ENCODE measurements at regions of chr7 and their contacts with region 1.

Region 1: GRCh38 chr7:123916240-123916724 is 8.8 kb upstream of the SPAM1 start:
- DNase-seq: peak; percentile 51
- ATAC-seq: peak; percentile 80
- H3K4me3 ChIP-seq: no peak overlapping the region
- H3K27ac ChIP-seq: no peak overlapping the region
- H3K4me1 ChIP-seq: no peaks in the 10 kb centered on the region
- H3K27me3 ChIP-seq: no peaks in the 10 kb centered on the region
- CTCF ChIP-seq: peak; percentile 65

Region 2: DNA sequence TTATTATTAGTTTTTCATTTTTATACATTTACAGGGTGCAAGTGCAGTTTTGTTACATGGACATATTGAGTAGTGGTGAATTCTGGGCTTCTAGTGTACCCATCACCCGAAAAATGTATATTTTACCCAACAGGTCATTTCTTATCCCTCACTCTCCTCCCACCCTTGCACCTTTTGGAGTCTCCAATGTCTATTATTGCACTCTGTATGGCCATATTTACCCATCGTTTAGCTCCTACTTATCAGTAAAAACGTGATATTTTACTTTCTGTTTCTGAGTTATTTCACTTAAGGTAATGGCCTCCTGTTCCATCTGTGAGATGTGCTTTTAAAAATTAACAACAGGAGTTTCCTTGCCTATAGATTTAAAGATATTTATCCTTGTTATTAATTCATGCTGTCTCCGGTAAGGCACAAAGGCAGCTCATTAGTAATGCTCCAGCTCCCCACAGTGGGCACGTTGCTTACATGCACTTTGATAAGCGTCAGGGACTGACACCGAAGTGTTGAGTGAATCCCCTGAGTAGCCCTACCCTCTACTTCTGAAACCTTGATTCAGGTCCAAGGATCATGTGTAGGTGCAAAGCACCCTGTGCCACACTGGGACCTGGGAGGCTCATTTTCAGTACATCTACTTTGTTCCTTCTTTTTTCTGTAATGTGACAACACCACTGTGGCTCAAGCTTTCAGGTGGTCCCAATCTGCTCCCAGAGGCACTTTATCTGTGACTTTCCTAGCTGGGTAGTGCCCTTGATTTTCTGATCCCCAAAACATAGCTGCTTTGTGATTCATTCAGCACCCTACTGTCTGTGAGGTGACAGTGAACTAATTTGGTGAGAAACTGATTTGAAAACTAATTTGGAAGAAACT is 44.0 kb before region 1 on chr7:
- CTCF ChIA-PET with region 1: no interaction called
- POLR2A ChIA-PET with region 1: no interaction called
- intact Hi-C with region 1: loop called (anchors 5 kb)
- DNase-seq: peak; percentile 76
- ATAC-seq: peak; percentile 98
- H3K4me3 ChIP-seq: no peak overlapping the region
- H3K27ac ChIP-seq: no peak overlapping the region
- H3K4me1 ChIP-seq: peaks cover 12% of the 10 kb centered on the region; the same call in 1 of the 2 replicates
- H3K27me3 ChIP-seq: no peaks in the 10 kb centered on the region
- CTCF ChIP-seq: peak; percentile 86

Region 3: GRCh38 chr7:124737744-124738300 is 821.5 kb after region 1 on chr7:
- CTCF ChIA-PET with region 1: no interaction called
- POLR2A ChIA-PET with region 1: no interaction called
- intact Hi-C with region 1: no loop called
- DNase-seq: no peak
- ATAC-seq: no peak
- H3K4me3 ChIP-seq: no peak overlapping the region
- H3K27ac ChIP-seq: no peak overlapping the region
- H3K4me1 ChIP-seq: no peaks in the 10 kb centered on the region
- H3K27me3 ChIP-seq: no peaks in the 10 kb centered on the region
- CTCF ChIP-seq: no peak

Measured in PC-3 (cell line).